Activated naive CD4-positive, alpha-beta T cell treated with anti-CD3 and anti-CD28 coated beads for 36 hours (primary cell): ENCODE measurements at regions of chr1 and their contacts with region 1.

Region 1: GRCh38 chr1:35577071-35577998 is 4.2 kb downstream of the TFAP2E start:
- DNase-seq: peak; percentile 76
- H3K4me3 Mint-ChIP-seq: peak overlapping the region; percentile 69
- H3K27ac Mint-ChIP-seq: peak overlapping the region; percentile 13
- H3K4me1 Mint-ChIP-seq: peaks cover 18% of the 10 kb centered on the region
- H3K27me3 Mint-ChIP-seq: peaks cover 20% of the 10 kb centered on the region

Region 2: DNA sequence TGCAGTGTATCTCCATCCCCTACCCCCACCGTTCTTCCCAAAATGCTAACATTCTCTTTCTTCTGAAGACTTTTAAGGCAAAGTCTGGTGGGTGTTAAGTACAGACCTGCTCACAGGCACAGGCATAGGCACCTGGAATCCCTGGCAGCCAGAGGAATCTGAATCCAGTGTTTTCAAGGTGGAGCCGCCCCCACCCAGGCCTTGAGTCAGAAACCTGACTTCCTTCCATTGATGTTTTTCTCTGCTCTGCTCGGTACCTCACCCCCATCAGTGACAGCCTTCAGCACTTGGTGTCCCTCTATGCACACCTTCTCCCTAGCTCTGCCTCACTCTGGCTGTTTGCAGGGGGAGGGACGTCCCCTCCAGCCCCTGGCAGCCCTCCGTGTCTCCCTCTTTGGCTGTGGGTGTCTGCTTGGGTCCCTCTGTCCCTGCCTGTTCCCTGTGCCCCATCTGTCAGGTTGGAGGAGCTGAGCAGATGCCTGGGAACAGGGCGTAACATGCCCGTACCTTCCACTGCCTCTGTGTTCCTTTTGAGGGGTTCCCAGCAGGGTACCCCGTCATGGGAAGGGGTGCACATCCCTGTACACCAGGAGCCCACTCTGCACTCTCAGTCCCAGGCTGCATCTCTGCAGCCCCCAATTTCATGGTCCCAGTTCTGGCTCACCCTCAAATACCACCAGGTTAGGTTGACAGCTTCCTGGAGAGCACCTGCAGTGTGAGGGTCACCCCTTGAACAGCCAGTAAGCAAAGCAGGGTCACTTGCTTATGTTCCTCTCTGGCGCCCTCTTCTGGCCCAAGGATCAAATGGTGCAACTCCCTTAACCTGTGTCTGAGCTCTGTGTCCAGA is 13.1 kb before region 1 on chr1:
- CTCF ChIA-PET with region 1: interaction called, 16 read pairs
- intact Hi-C with region 1: no loop called
- DNase-seq: peak; percentile 92
- H3K4me3 Mint-ChIP-seq: no peak overlapping the region
- H3K27ac Mint-ChIP-seq: no peak overlapping the region
- H3K4me1 Mint-ChIP-seq: peaks cover 16% of the 10 kb centered on the region
- H3K27me3 Mint-ChIP-seq: no peaks in the 10 kb centered on the region

Region 3: DNA sequence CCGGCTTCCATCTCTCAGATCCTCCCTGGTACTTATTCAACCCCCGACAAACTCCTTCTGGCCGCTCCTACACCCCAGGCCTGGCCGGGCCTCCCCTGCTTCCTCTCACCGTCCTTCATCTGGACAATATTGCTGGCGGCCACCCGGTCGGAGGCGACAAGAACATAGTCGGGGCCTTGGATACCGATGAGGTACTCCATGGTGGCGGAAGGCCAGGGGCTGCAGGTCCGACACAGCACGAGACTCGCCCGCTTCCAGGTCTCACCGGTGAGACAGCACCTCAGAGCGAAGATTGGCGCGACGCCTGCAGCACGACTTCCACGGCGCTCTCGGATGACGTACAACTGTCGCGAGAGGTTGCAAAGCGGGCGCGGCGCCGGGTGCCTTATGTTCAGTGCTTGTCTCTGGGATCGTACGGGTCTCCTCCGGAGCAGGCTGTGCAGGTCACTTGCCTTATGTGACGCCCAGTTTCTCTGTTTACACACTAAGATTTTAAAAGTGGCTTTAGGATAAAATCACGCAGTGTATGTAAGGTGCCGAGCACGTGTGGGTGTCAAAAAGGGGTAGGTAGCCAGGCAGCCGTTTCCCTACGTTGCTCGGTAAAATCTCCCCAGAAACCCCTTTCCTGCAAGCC is 64.0 kb after region 1 on chr1 and contains the start of gene PSMB2:
- CTCF ChIA-PET with region 1: no interaction called
- intact Hi-C with region 1: loop called (anchors 5 kb)
- DNase-seq: peak; percentile 98
- H3K4me3 Mint-ChIP-seq: peak within 1 kb of the TSS; percentile 100
- H3K27ac Mint-ChIP-seq: peak within 1 kb of the TSS; percentile 99
- H3K4me1 Mint-ChIP-seq: peaks cover 30% of the 10 kb centered on the region
- H3K27me3 Mint-ChIP-seq: peaks cover 5% of the 10 kb centered on the region
- total RNA-seq, gene PSMB2: 91.9 to 96.4 TPM

Region 4: DNA sequence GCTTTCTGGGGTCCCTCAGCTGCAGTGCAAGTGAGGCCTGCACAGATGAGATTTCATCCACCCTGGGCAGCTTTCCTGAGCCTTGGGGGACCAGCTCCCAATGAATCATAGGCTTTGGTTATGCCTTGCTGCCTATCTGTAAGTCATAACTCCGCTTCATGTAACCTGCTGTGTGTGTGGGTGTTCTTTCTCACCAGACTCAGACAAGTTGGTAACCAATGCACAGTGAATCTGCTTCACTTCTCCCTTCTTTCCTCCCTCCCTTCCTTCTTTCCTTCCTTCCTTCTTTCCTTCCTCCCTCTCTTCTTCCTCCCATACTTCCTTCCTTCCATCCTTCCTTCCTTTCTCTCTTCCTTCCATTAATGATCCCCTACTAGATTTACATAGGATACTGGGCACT is 98.4 kb after region 1 on chr1:
- CTCF ChIA-PET with region 1: no interaction called
- intact Hi-C with region 1: no loop called
- DNase-seq: no peak
- H3K4me3 Mint-ChIP-seq: no peak overlapping the region
- H3K27ac Mint-ChIP-seq: no peak overlapping the region
- H3K4me1 Mint-ChIP-seq: no peaks in the 10 kb centered on the region
- H3K27me3 Mint-ChIP-seq: peaks cover 2% of the 10 kb centered on the region

Region 5: DNA sequence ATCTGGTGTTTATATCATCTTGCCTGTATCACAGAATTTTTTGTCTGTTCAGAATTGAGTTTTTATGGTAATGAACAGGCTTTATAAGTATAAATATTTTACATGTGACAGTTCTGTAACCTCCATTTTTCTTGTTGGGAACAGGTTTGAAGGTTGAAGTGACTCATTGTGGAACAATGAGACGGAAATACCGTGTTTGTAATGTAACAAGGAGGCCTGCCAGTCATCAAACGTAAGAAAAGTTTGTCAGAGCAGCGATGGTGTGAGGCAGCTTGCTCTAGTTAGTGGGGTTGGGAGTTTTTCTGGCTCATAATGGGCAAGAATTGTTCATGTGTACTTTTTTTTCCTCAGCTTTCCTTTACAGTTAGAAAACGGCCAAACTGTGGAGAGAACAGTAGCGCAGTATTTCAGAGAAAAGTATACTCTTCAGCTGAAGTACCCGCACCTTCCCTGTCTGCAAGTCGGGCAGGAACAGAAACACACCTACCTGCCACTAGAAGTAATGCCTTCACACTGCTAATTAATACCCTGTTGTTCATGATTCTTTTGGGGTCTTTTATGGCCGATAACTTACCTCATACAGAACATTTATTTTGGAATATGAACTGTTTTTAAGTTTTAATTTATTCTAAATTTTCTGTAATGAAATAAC is 431.3 kb after region 1 on chr1:
- CTCF ChIA-PET with region 1: no interaction called
- intact Hi-C with region 1: no loop called
- DNase-seq: peak; percentile 14
- H3K4me3 Mint-ChIP-seq: no peak overlapping the region
- H3K27ac Mint-ChIP-seq: no peak overlapping the region
- H3K4me1 Mint-ChIP-seq: no peaks in the 10 kb centered on the region
- H3K27me3 Mint-ChIP-seq: no peaks in the 10 kb centered on the region